Activated naive CD8-positive, alpha-beta T cell treated with anti-CD3 and anti-CD28 coated beads, Interleukin-2, amount 10 ng/mL, durations not matched to agents 7 days and 5 days (primary cell): ENCODE measurements at regions of chr1 and their contacts with region 1.

Region 1: GRCh38 chr1:176206961-176207902 is at the start of gene COP1:
- DNase-seq: peak; percentile 91
- ATAC-seq: peak; percentile 88
- H3K4me3 Mint-ChIP-seq: peak within 1 kb of the TSS; percentile 100
- H3K27ac Mint-ChIP-seq: peak within 1 kb of the TSS; percentile 100
- H3K4me1 Mint-ChIP-seq: peaks cover 18% of the 10 kb centered on the region
- H3K27me3 Mint-ChIP-seq: no peaks in the 10 kb centered on the region
- total RNA-seq, gene COP1: 43.2 to 46.8 TPM

Region 2: GRCh38 chr1:176196728-176197127 is 10.5 kb before region 1 on chr1:
- POLR2A ChIA-PET with region 1: interaction called, 10 read pairs
- DNase-seq: no peak
- ATAC-seq: no peak
- H3K4me3 Mint-ChIP-seq: peak overlapping the region; percentile 74
- H3K27ac Mint-ChIP-seq: peak overlapping the region; percentile 38
- H3K4me1 Mint-ChIP-seq: peaks cover 37% of the 10 kb centered on the region
- H3K27me3 Mint-ChIP-seq: no peaks in the 10 kb centered on the region